Activated T-helper 2 cell treated with anti-CD3 and anti-CD28 coated beads, Interferon-gamma antibody, Interleukin-2, Interleukin-4, amounts not matched to agents 10 μg/mL and 5 μg/mL and 100 μg/mL, durations not matched to agents 14 hours and 24 hours and 36 hours (primary cell): ENCODE measurements at regions of chr16 and their contacts with region 1.

Region 1: DNA sequence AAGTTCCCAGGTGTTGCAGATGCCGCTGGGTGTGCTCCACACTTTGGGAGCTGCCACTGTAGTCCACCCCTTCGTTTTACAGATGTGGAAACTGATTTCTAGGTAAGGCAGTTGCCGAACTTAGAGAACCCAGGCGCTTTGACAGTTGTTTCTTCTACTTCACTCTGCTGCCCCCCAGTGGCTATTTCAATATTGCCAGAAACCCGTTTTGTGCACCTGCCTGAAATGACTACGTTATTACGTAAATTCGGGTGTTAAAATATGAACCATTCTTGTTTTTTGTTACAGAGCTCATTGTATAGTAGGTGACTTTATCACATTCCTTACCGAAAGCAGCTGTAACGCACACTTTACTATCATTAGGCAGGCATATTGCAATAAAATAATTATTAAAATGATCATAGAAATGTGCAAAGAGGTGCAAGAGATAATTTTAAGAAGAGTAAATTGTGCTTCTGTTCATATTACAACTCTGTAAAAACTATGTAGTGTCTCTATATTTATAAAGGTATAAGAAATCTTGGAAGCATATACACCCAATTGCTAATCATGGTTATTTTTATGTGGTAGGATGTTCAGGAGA is 44.9 kb downstream of the OTOA start:
- DNase-seq: peak; percentile 71
- H3K4me3 Mint-ChIP-seq: no peak overlapping the region
- H3K27ac Mint-ChIP-seq: no peak overlapping the region
- H3K4me1 Mint-ChIP-seq: peaks cover 5% of the 10 kb centered on the region
- H3K27me3 Mint-ChIP-seq: peaks cover 2% of the 10 kb centered on the region

Region 2: GRCh38 chr16:21584817-21585216 is 123.8 kb before region 1 on chr16:
- intact Hi-C with region 1: loop called (anchors 2 kb)
- DNase-seq: no peak
- H3K4me3 Mint-ChIP-seq: no peak overlapping the region
- H3K27ac Mint-ChIP-seq: no peak overlapping the region
- H3K4me1 Mint-ChIP-seq: peaks cover 3% of the 10 kb centered on the region
- H3K27me3 Mint-ChIP-seq: peaks cover 3% of the 10 kb centered on the region

Region 3: GRCh38 chr16:21656795-21657768 is 51.5 kb before region 1 on chr16:
- intact Hi-C with region 1: loop called (anchors 1 kb)
- DNase-seq: no peak
- H3K4me3 Mint-ChIP-seq: no peak overlapping the region
- H3K27ac Mint-ChIP-seq: no peak overlapping the region
- H3K4me1 Mint-ChIP-seq: peaks cover 37% of the 10 kb centered on the region
- H3K27me3 Mint-ChIP-seq: no peaks in the 10 kb centered on the region

Region 4: DNA sequence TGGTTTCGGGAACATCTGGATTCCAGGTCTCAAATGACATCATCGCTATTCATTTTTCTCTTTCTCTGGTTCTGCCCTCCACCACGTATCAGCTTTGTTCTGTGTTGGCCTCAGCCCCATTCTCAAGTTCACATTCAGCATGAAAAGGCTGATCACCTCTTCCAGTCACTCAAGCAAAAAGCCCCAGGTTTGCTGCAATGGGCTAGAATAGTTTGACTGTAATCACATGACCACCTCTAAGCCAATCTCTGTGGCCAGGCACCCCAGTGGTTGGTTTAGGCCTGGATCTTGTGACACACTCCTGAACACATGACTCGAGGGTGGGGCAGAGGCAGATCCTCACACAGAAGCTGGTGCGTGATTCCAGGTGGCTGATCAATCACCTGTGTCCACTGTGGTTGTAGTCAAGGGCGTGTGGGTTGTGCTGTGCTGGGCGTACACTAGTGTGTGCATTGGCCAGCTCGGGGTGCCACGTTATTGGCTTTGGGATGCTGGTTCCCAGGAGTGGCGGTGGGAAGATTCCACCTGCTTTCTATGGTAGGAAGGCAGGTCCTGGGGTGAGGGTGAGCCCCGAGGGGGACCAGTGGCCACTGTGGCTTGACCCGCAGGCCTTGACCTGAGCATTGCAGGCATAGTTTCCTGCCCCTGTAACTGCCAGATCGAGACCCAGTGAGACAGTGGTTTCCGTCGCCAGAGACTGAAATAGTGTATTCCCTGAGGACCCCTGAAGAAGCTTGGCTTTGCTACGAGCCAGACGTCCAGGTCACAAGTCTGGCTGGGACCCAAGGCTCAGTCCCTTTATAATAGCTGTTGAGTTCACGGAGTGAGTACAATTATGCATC is 509.5 kb after region 1 on chr16:
- intact Hi-C with region 1: no loop called
- DNase-seq: no peak
- H3K4me3 Mint-ChIP-seq: no peak overlapping the region
- H3K27ac Mint-ChIP-seq: peak overlapping the region; percentile 76
- H3K4me1 Mint-ChIP-seq: peaks cover 46% of the 10 kb centered on the region
- H3K27me3 Mint-ChIP-seq: no peaks in the 10 kb centered on the region